Transverse colon (tissue), 4 donors: ENCODE measurements at regions of chr20 and their contacts with region 1.

Region 1: GRCh38 chr20:23320317-23320716 is 30.3 kb upstream of the NXT1 start:
- DNase-seq: no peak
- H3K4me3 ChIP-seq: no peak overlapping the region
- H3K27ac ChIP-seq: no peak overlapping the region
- H3K4me1 ChIP-seq: no peaks in the 10 kb centered on the region
- H3K27me3 ChIP-seq: no peaks in the 10 kb centered on the region
- CTCF ChIP-seq: peak; percentile 16 to 36 (median 34)
- EP300 ChIP-seq: no peak
- POLR2A ChIP-seq: no peak

Region 2: DNA sequence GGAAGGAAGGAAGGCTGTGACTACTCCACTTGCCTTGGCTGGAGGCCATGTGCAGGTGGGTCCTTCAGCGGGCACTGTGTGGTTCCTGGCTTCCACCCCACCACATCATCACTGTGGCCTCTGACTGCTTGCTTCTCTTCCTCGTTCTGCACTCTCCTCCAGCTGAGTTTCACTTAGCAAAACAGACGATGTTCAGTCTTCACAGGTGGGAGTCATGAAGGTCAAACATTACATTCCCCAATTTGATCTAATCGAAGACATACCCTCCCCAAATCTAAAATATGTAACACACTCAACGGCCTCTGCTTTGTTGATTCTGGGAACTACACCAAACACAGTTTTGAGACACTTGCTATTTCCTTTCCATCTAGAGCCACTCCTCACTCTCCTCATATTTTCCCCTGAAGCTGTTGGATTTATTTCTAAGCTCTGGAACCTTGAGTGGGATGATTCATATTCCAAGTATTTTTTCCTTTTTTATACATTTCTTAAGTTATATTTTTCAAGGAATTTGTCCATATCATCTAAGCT is 603.4 kb before region 1 on chr20:
- in situ Hi-C with region 1: loop called in 1 of 4 experiments (anchors 25 kb)
- intact Hi-C with region 1: loop called (anchors 10 kb)
- DNase-seq: no peak
- H3K4me3 ChIP-seq: no peak overlapping the region
- H3K27ac ChIP-seq: peak overlapping the region in 1 of 4 donors; percentile 37
- H3K4me1 ChIP-seq: peaks cover 0 to 27% (median 8%) of the 10 kb centered on the region in 4 donors
- H3K27me3 ChIP-seq: no peaks in the 10 kb centered on the region
- CTCF ChIP-seq: no peak
- EP300 ChIP-seq: no peak
- POLR2A ChIP-seq: no peak

Region 3: DNA sequence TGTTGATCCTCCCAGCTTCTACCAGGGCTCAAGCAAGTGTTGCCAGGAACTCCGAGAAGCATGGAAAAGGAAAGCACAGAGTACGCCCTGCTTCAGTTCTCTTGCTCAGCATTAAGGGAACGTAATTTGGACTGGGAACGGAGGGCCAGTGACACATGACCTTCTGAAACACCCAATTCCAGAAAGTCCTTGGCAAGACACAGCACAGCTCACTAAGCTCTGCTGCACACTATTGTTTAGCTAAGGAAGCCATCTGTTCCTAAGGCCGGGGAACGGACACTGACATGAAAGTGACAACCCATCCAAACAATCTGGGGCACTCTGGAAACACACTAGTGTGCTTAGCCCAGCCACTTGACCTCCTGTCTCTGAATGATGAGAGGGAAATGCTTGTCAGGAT is 26.6 kb before region 1 on chr20:
- in situ Hi-C with region 1: no loop called
- intact Hi-C with region 1: no loop called
- DNase-seq: peak; percentile 26
- H3K4me3 ChIP-seq: no peak overlapping the region
- H3K27ac ChIP-seq: peak overlapping the region; percentile 29 to 65 (median 48)
- H3K4me1 ChIP-seq: peaks cover 0 to 5% (median 0%) of the 10 kb centered on the region in 4 donors
- H3K27me3 ChIP-seq: no peaks in the 10 kb centered on the region
- CTCF ChIP-seq: no peak
- EP300 ChIP-seq: no peak
- POLR2A ChIP-seq: no peak